ENCODE measurements at regions of chr3 and their contacts with region 1.

Region 1: GRCh38 chr3:122942937-122943827 is 84.4 kb downstream of the SEMA5B start:
- DNase-seq: peak; percentile 56
- H3K4me3 ChIP-seq: no peak overlapping the region
- H3K27ac ChIP-seq: no peak overlapping the region
- H3K4me1 ChIP-seq: peaks cover 0 to 5% (median 1%) of the 10 kb centered on the region in 4 donors
- H3K27me3 ChIP-seq: no peaks in the 10 kb centered on the region
- CTCF ChIP-seq: peak; percentile 83 to 91 (median 86)
- EP300 ChIP-seq: no peak
- POLR2A ChIP-seq: no peak

Region 2: DNA sequence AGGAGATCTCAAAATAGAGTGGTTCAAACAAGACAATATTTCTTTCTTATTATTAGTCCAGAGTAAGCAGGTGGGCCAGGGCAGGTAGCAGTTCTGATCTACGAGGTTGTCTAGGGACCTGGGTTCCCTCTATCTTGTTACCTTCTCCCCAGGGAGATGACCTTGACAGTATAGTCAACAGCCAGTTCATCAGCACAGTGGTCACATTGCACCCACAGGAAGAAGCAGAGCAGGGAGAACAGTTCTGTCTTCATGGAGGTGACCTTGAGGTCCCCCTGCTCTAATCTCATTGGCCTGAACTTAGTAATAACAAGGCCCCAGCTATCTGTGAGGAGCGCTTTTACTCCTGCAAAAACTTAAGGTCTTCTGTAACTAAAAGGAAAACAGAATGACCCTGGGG is 126.6 kb before region 1 on chr3:
- in situ Hi-C with region 1: no loop called
- intact Hi-C with region 1: no loop called
- DNase-seq: no peak
- H3K4me3 ChIP-seq: no peak overlapping the region
- H3K27ac ChIP-seq: no peak overlapping the region
- H3K4me1 ChIP-seq: no peaks in the 10 kb centered on the region
- H3K27me3 ChIP-seq: no peaks in the 10 kb centered on the region
- CTCF ChIP-seq: no peak
- EP300 ChIP-seq: no peak
- POLR2A ChIP-seq: no peak

Region 3: GRCh38 chr3:122969585-122970453 is 26.6 kb after region 1 on chr3:
- in situ Hi-C with region 1: no loop called
- intact Hi-C with region 1: no loop called
- DNase-seq: no peak
- H3K4me3 ChIP-seq: no peak overlapping the region
- H3K27ac ChIP-seq: no peak overlapping the region
- H3K4me1 ChIP-seq: peaks cover 0 to 6% (median under 1%) of the 10 kb centered on the region in 4 donors
- H3K27me3 ChIP-seq: no peaks in the 10 kb centered on the region
- CTCF ChIP-seq: no peak
- EP300 ChIP-seq: no peak
- POLR2A ChIP-seq: no peak

Region 4: DNA sequence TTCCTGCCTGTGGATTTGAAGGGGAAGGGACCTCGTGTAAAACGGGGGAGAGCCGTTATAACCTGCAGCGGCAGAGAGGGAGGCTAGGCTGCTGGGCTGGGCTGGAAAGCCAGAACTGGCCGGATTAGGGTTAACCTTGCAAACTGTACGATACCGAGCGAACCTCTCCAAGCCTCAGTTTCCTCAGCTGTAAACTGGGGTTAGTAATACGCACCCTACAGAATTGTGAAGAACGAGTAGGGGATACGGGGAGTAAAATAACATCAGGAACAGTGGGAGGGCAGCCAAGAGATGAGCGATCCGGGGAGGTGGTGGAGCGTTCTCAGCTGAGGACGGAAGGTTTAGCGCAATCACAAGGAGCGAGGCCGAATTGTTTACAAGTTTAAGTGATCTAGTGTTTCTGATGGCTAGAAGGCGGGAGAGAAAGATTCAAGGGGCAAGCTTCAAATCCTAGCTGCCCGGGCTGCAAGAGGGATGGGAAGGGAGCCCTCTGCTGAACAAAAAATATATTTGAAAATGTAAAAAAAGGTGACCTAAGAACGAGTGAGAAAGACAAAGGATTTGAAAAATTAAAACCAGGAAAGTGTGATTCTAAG is 85.1 kb after region 1 on chr3:
- in situ Hi-C with region 1: no loop called
- intact Hi-C with region 1: loop called (anchors 10 kb)
- DNase-seq: peak; percentile 31
- H3K4me3 ChIP-seq: peak overlapping the region; percentile 26 to 59 (median 39)
- H3K27ac ChIP-seq: no peak overlapping the region
- H3K4me1 ChIP-seq: peaks cover 12 to 31% (median 23%) of the 10 kb centered on the region in 4 donors
- H3K27me3 ChIP-seq: peaks cover 90% of the 10 kb centered on the region
- CTCF ChIP-seq: peak; percentile 31 to 43 (median 35)
- EP300 ChIP-seq: no peak
- POLR2A ChIP-seq: no peak

Region 5: DNA sequence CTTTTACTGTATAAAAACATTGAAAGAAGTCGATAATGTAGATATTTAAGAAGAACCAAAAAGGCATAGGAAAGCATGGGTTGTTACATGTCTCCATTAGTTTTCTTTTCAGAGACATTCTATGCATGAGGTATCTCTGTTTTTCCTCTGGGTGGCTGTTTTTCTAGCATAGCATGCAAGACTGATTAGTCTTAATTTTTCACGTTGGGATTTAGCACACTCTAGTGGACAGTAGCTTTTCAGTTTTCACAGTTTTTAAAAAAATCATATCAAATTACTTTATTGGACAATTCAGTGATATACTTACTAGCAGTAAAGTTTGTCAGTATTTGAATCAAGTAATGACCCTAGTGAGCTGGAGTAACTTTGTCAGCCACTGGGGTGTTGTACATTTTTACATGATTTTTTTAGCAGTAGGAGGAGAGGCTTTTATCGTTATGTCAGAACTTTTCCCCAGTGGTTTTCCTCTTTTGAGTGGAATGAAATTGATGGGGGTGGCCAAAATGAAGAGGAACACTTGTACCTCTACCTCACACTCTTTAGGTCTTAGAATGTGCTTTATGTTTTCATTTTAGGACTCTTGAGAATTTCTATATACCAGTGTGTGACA is 315.7 kb after region 1 on chr3:
- in situ Hi-C with region 1: loop called in 2 of 4 experiments (anchors 25 kb)
- intact Hi-C with region 1: no loop called
- DNase-seq: no peak
- H3K4me3 ChIP-seq: no peak overlapping the region
- H3K27ac ChIP-seq: no peak overlapping the region
- H3K4me1 ChIP-seq: peaks cover 0 to 4% (median 2%) of the 10 kb centered on the region in 4 donors
- H3K27me3 ChIP-seq: no peaks in the 10 kb centered on the region
- CTCF ChIP-seq: peak; percentile 42 to 53 (median 51)
- EP300 ChIP-seq: no peak
- POLR2A ChIP-seq: no peak

Measured in transverse colon (tissue), 4 donors.